ENCODE measurements at regions of chr14 and their contacts with region 1.

Region 1: DNA sequence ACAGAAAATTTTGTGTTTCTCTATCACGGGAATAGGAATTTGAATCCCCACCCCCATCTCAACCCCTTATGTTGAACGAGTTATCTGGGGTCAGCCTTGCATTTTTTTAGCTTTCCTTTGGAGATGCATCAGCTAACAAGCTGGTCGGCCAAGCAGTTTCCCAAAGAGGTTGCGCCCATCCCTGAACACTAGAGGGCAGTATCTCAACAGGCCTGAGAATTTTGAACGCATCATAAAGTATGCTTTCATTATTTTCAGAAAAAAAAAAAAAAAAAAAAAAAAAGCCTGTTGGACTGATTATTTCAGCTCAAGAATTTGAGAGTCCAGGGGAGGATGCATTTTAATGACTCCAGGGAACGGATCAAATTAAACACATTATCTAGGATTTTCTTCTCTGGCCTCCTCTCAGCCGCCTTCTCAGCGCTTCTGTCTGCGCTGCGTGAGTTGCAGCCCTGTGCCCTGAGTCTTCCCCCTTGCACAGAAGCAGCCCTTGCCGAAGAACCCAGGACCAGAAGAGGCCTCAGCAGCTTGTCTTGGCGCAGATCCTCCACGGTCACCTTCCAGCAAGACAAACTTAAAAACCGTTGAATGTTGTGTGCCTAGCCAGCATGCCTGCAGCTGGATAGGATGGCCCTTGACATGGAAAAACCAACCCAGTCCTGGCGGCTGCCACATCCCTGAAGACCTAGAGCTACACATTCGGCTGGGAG is 76.6 kb upstream of the GZMB start:
- DNase-seq: peak; percentile 62
- CTCF ChIP-seq: peak; percentile 89

Region 2: DNA sequence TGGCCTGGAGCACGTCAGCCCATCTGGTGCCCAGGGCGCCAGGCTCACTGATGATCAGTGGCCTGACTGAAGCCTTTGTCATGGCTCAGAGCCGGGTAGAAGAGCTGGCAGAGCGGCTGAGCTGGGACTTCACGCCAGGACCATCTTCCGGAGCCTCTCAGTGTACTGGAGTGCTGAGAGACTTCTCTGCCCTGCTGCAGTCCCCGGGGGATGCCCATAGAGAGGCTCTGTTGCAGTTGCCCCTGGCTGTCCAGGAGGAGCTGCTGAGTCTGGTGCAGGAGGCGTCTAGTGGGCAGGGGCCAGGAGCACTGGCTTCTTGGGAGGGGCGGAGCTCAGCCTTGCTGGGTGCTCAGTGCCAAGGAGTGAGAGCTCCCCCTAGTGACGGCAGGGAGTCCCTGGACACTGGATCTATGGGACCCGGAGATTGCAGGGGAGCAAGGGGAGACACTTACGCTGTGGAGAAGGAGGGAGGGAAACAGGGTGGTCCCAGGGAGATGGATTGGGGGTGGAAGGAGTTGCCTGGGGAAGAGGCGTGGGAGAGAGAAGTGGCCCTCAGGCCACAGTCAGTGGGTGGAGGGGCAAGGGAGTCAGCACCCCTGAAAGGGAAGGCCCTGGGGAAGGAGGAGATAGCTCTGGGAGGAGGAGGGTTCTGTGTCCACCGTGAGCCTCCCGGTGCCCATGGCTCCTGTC is 278.8 kb before region 1 on chr14:
- CTCF ChIA-PET with region 1: no interaction called
- POLR2A ChIA-PET with region 1: no interaction called
- DNase-seq: peak; percentile 90
- CTCF ChIP-seq: peak; percentile 96

Region 3: GRCh38 chr14:24605435-24606190 is 104.9 kb before region 1 on chr14:
- CTCF ChIA-PET with region 1: interaction called, 14 read pairs
- POLR2A ChIA-PET with region 1: no interaction called
- DNase-seq: peak; percentile 77
- CTCF ChIP-seq: peak; percentile 86

Region 4: DNA sequence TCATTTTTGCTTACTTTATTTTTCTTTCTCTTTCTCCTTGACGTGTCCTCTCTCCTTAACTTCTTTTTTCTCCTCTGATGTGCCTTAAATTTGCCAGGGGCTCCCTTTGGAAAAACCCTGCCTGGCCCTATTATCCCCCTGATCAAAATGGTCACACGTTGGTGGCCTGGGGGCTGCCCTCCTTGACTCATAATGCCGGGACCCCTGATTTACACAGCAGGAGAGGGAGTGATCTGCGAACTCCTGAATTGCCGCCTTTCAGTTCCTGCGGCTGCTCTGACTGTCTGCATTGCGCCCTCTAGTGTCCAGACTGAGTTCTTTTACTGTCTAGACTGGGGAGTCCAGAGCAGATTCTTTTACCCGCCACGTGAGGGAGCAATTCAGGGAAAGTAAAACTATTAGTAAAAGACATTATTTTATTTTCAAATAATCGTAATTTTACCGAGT is 31.7 kb before region 1 on chr14:
- CTCF ChIA-PET with region 1: interaction called, 25 read pairs
- POLR2A ChIA-PET with region 1: no interaction called
- DNase-seq: peak; percentile 77
- CTCF ChIP-seq: peak; percentile 97

Region 5: GRCh38 chr14:24699052-24699451 is 11.5 kb before region 1 on chr14:
- CTCF ChIA-PET with region 1: interaction called, 28 read pairs
- POLR2A ChIA-PET with region 1: no interaction called
- DNase-seq: no peak
- CTCF ChIP-seq: no peak

Region 6: GRCh38 chr14:24789378-24789884 is 78.9 kb after region 1 on chr14:
- CTCF ChIA-PET with region 1: no interaction called
- POLR2A ChIA-PET with region 1: no interaction called
- DNase-seq: no peak
- CTCF ChIP-seq: no peak

Region 7: DNA sequence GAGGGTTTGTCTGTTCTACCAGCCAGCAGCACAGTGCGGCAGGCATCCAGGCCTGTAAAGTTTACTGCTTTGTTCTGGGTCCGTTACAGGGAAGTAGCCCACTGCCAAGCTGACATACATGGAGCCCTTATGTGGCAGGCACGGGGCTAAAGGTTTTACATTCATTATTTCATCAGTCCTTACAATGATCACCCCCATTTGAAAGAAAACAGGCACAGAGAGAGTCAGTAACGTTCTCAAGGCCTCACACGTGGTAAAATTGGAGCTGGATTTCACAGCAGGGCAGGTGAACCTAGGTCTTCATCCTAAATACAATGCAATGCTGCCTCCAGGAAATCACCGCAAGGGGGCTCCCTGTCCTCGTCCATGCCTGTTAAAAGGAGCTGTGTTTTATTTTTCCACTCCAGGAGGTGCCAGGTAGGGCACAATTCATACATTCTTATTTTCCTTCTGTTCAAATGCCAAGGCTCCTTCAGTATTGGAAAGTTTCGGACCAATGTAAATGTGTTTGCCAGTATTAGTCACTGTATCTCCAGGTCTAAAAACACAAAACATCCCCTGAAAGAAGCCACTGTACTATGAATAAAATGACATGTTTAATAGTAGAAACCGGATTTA is 95.6 kb after region 1 on chr14:
- CTCF ChIA-PET with region 1: interaction called, 19 read pairs
- POLR2A ChIA-PET with region 1: no interaction called
- DNase-seq: peak; percentile 43
- CTCF ChIP-seq: peak; percentile 70

Region 8: GRCh38 chr14:25150934-25151790 is 440.6 kb after region 1 on chr14:
- CTCF ChIA-PET with region 1: interaction called, 11 read pairs
- POLR2A ChIA-PET with region 1: no interaction called
- DNase-seq: peak; percentile 52
- CTCF ChIP-seq: peak; percentile 75